Mucosa of descending colon (tissue), 3 donors: ENCODE measurements at regions of chr17 and their contacts with region 1.

Region 1: GRCh38 chr17:73657473-73658116 is 13.3 kb upstream of the SDK2 start:
- DNase-seq: peak in 2 of 3 donors; percentile 83 to 84
- ATAC-seq: peak; percentile 85
- H3K4me3 ChIP-seq: no peak overlapping the region
- H3K4me1 ChIP-seq: peaks cover 15% of the 10 kb centered on the region
- CTCF ChIP-seq: no peak

Region 2: GRCh38 chr17:73956669-73957465 is 299.3 kb after region 1 on chr17:
- intact Hi-C with region 1: loop called in 1 of 2 experiments (anchors 10 kb)
- DNase-seq: peak; percentile 74 to 81 (median 78)
- ATAC-seq: peak; percentile 80
- H3K4me3 ChIP-seq: no peak overlapping the region
- H3K4me1 ChIP-seq: peaks cover 29% of the 10 kb centered on the region
- CTCF ChIP-seq: no peak